Head of caudate nucleus (tissue), 42 donors: ENCODE measurements at regions of chr3 and their contacts with region 1.

Region 1: GRCh38 chr3:149657926-149658733 is at the start of gene WWTR1:
- DNase-seq: peak; percentile 65 to 93 (median 82)

Region 2: GRCh38 chr3:148861277-148861869 is 796.8 kb before region 1 on chr3:
- intact Hi-C with region 1: no loop called
- DNase-seq: peak in 3 of 42 donors; percentile 11 to 40 (median 14)

Region 3: GRCh38 chr3:148955544-148956346 is 702.4 kb before region 1 on chr3:
- intact Hi-C with region 1: no loop called
- DNase-seq: peak in 19 of 42 donors; percentile 11 to 80 (median 48)

Region 4: GRCh38 chr3:149473357-149474249 is 184.5 kb before region 1 on chr3:
- intact Hi-C with region 1: no loop called
- DNase-seq: no peak

Region 5: DNA sequence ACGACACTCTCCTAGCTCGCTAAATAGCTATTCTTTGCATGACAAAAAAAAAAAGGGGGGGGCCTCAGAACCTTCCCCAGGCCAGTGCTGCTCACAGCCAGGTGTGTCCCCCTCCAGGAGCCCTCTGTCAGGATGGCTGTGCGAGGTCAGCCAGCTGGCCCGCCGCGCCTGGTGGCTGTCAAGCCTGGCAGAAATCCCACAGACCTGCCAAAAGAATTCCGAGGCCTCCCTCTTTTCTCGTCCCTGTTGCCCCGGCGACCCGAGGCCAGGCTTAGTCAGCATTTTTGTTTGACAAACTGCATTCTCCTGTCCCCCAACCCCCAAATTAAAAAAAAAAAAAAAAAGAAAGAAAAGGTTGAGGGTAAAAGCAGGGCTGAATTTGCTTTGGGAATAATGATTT is 121.7 kb before region 1 on chr3:
- intact Hi-C with region 1: loop called (anchors 10 kb)
- DNase-seq: peak in 34 of 42 donors; percentile 9 to 78 (median 44)

Region 6: DNA sequence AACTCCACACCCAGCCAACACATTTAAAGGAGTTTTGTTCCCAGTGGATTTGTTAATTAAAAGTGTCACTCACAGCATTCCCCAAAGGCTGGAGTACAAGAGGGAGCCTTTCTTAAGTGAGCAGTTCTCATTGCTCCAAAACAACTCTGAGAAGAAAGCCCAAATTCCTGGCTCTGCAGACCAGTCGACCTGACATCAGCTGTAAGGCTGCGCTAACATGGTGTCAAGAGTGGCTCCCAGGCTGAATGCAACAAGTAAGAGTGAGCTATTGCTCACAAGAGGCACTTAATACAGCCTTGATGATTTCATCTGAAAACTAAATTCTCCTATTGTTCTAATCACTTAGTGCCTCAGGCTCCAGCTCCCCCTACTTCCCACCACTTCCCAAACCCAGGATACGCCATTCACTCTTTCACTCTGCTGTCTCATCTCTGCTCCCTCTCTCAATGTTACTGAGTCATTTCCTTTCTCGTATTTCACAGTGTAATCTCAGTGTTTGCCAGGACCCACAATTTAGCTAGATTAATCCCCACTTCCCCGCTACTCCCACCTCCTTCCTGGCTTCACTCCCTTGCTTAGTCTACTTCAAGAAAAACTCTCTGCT is 82.1 kb before region 1 on chr3:
- intact Hi-C with region 1: loop called (anchors 10 kb)
- DNase-seq: peak in 14 of 42 donors; percentile 8 to 79 (median 28)